ENCODE measurements at regions of chr1 and their contacts with region 1.

Region 1: DNA sequence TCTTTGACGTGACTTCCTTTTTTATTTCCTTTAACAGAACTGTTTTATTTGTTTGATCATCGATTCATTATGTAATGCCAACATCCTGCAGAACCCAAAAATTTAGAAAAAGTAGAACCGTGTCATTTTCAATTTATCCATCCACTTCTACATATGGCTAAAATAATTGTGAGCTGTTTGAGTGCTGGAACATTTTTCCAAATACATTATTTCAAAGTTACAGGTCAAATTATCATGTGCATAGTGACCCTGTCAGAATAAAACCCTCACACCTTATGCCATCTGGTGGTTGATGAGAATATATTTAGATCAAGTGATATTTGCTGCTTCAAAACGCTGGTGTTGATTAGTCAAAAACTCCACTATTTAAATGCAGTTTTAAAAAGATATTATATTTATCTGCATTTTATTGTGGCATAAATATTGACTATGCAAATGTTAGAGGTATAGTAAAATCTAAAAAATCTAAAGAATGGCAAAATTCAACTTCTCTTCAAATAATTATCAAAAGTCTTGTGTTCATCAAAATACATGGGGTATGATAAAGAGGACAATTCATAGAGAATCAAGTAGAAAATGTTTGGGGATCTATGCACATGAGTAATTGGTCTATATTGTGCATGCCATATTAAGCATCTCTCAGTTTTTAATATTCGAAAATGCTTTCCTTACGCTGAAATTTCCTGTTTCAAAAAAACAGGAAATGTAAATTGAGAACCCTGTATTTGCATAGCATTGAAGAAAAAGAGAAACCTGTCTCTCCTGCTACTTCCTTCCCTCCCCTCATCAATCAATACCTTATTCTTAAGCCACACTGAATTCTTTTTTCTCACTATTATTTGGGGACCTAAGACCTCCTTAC is 39.7 kb downstream of the UBE2U start:
- DNase-seq: peak; percentile 71
- H3K4me3 ChIP-seq: no peak overlapping the region
- H3K27ac ChIP-seq: no peak overlapping the region
- H3K4me1 ChIP-seq: peaks cover 19% of the 10 kb centered on the region
- H3K27me3 ChIP-seq: no peaks in the 10 kb centered on the region

Region 2: GRCh38 chr1:63615768-63616420 is 627.2 kb before region 1 on chr1:
- in situ Hi-C with region 1: loop called (anchors 25 kb)
- DNase-seq: peak; percentile 64
- H3K4me3 ChIP-seq: no peak overlapping the region
- H3K27ac ChIP-seq: no peak overlapping the region
- H3K4me1 ChIP-seq: peaks cover 13% of the 10 kb centered on the region
- H3K27me3 ChIP-seq: no peaks in the 10 kb centered on the region

Region 3: DNA sequence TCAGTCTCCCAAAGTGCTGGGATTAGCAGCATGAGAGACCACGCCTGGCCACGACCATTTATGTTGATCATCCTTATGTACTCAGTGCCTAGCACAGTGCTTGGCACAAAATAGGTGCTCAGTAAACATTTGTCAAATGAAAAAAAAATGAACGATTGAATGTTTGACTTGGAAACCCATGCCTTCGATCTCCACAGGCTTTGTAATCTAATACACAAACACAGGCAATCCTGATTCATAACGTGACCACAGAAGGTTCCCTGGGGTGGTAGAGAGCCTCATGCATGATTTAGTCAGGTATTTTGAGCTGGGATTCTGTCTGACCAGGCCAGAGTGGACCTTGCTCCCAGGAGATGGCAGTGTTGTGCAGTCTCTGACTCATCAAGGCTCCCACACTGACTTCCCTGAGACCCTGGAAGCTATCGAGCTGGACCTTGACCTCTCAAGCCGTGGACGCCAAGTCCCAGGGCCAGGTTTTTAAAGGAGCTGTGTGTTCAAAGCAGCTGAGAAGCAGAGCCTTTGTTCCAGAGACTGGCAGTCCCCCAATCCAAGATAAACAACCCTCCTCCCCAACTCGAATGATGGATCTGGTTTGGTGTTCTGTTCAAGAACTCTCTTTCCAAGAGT is 568.8 kb before region 1 on chr1:
- in situ Hi-C with region 1: loop called (anchors 10 kb)
- DNase-seq: peak; percentile 93
- H3K4me3 ChIP-seq: no peak overlapping the region
- H3K27ac ChIP-seq: peak overlapping the region; percentile 24
- H3K4me1 ChIP-seq: peaks cover 4% of the 10 kb centered on the region; the same call in 1 of the 2 replicates
- H3K27me3 ChIP-seq: no peaks in the 10 kb centered on the region

Region 4: GRCh38 chr1:63773815-63774616 is 469.1 kb before region 1 on chr1 and contains the start of gene ROR1:
- in situ Hi-C with region 1: loop called (anchors 10 kb)
- DNase-seq: peak; percentile 94
- H3K4me3 ChIP-seq: peak within 1 kb of the TSS; percentile 95
- H3K27ac ChIP-seq: 0 out of 2 replicates have a peak within 1 kb of the TSS, but pooled peaks have one; percentile 14
- H3K4me1 ChIP-seq: peaks cover 12% of the 10 kb centered on the region; the same call in 1 of the 2 replicates
- H3K27me3 ChIP-seq: no peaks in the 10 kb centered on the region
- total RNA-seq, gene ROR1: 12.0 and 20.9 TPM in 2 replicates

Region 5: DNA sequence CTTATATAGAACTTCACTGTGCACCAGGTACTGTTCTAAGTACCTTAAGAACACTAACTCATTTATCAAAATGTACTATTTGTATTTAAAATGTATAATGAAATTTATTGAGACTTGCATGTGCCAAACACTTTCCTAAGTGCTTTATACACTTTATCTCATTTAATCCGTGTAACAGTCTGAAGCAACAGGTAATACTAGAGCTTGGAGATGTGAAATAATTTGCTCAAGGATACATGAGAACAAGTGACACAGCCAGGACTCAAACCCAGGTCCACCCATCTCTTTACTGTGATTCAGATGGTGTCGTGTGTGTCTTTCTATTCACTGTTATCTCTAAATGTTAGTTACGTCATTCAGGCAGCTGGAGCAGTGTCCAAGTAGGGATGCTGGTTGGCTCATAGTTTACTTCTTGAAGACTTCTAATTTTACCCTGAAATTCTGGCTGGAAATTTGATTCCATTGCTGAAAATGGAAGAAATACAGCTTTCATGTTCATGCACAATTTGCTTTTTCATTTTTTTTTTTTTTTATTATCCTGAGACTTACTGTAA is 209.4 kb before region 1 on chr1:
- in situ Hi-C with region 1: no loop called
- DNase-seq: peak; percentile 63
- H3K4me3 ChIP-seq: no peak overlapping the region
- H3K27ac ChIP-seq: no peak overlapping the region
- H3K4me1 ChIP-seq: peaks cover 20% of the 10 kb centered on the region
- H3K27me3 ChIP-seq: no peaks in the 10 kb centered on the region

Region 6: DNA sequence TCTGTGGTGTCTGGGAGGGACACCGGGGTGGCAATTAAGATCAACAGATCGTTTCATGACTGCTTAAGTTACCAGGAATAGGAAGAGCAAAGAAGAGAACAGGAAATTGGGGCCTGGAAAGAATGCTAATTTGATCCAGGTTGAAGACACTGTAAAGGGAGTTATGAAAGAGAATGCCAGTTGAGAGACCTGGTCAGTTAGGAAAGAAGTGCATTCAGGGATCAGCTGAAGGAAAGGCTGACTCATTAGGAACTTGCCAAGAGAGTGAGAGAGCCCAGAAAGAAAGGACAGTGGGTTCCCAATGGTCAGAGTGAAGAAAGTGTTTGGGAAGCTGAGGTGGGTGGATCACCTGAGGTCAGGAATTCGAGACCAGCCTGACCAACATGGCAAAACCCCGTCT is 79.9 kb after region 1 on chr1:
- in situ Hi-C with region 1: no loop called
- DNase-seq: peak; percentile 61
- H3K4me3 ChIP-seq: no peak overlapping the region
- H3K27ac ChIP-seq: no peak overlapping the region
- H3K4me1 ChIP-seq: no peaks in the 10 kb centered on the region
- H3K27me3 ChIP-seq: peaks cover 5% of the 10 kb centered on the region; the same call in 1 of the 2 replicates

Region 7: GRCh38 chr1:64608005-64608650 is 365.0 kb after region 1 on chr1:
- in situ Hi-C with region 1: no loop called
- DNase-seq: peak; percentile 9
- H3K4me3 ChIP-seq: no peak overlapping the region
- H3K27ac ChIP-seq: no peak overlapping the region
- H3K4me1 ChIP-seq: 0 out of 2 replicates have a peak, but pooled peaks cover 3% of the 10 kb centered on the region
- H3K27me3 ChIP-seq: no peaks in the 10 kb centered on the region